Keratinocyte (primary cell): ENCODE measurements at regions of chr11 and their contacts with region 1.

Region 1: GRCh38 chr11:4072668-4073285 is 21.8 kb upstream of the RRM1 start:
- DNase-seq: no peak
- H3K4me3 ChIP-seq: no peak overlapping the region
- H3K27ac ChIP-seq: no peak overlapping the region
- H3K4me1 ChIP-seq: peaks cover 13% of the 10 kb centered on the region
- H3K27me3 ChIP-seq: no peaks in the 10 kb centered on the region
- CTCF ChIP-seq: peak; percentile 76 to 90 (median 82)

Region 2: DNA sequence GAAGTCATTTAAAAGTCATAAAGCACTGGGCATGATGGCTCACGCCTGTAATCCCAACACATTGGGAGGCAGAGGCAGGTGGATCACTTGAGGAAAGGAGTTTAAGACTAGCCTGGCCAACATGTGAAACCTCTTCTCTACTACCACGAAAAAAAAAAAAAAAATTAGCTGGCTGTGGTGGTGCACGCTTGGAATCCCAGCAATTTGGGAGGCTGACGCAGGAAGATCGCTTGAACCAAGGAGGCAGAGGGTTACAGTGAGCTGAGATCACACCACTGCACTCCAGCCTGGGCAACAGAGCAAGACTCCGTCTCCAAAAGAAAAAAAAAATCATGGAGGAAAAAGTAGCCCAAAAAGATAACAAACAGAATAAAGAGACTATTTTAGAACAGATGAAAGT is 317.6 kb before region 1 on chr11:
- dilution Hi-C with region 1: no loop called
- DNase-seq: no peak
- H3K4me3 ChIP-seq: no peak overlapping the region
- H3K27ac ChIP-seq: no peak overlapping the region
- H3K4me1 ChIP-seq: no peaks in the 10 kb centered on the region
- H3K27me3 ChIP-seq: no peaks in the 10 kb centered on the region
- CTCF ChIP-seq: no peak

Region 3: DNA sequence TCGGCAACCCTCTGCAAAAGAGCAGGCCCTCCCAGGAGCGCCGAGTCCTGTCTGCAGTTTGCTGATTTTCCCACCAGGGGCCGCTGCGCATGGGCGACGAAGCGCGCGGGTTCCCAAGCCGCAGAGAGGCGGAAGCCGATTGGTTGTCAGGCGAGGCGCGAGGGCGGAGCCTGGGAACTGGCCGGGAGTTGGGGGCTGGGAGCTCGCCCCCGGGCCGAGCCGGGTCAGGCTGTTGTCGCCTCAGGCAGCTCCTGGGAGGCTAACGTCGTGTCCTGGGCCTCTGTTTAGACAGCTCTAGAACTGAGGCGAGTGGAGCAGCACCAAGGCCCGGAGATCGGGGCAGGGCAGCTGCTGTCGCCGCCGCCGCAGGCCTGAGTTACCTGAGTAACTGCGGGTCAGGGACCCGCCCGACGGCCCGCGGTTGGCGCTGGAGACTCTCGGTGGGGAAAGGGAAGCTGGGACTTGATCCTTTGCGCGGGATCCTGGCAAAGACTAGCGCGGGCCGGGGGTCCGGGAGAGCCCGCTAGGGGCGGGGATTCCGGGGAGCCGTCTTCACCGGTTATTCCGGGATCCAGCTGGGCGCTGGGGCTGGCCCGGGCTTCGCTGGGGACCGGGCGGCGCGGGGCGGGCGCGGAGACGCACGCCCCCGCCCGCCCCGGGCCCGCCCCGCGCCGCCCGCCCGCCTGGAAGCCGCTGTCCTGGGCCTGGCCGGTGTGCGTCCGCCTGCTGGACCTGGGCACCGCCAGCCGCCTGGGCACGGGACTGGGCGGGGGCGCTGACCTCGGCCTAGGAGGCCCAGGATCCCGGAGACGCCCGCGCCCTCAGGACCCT is 217.6 kb before region 1 on chr11 and contains the start of gene STIM1:
- dilution Hi-C with region 1: loop called (anchors 25 kb)
- DNase-seq: peak; percentile 28
- H3K4me3 ChIP-seq: peak within 1 kb of the TSS; percentile 77 to 91 (median 83)
- H3K27ac ChIP-seq: peak within 1 kb of the TSS; percentile 85
- H3K4me1 ChIP-seq: peaks cover 37% of the 10 kb centered on the region
- H3K27me3 ChIP-seq: no peaks in the 10 kb centered on the region
- CTCF ChIP-seq: peak; percentile 84 to 95 (median 89)
- polyA plus RNA-seq, gene STIM1: 23.7 to 39.4 TPM (median 25.1 TPM) in 3 replicates

Region 4: DNA sequence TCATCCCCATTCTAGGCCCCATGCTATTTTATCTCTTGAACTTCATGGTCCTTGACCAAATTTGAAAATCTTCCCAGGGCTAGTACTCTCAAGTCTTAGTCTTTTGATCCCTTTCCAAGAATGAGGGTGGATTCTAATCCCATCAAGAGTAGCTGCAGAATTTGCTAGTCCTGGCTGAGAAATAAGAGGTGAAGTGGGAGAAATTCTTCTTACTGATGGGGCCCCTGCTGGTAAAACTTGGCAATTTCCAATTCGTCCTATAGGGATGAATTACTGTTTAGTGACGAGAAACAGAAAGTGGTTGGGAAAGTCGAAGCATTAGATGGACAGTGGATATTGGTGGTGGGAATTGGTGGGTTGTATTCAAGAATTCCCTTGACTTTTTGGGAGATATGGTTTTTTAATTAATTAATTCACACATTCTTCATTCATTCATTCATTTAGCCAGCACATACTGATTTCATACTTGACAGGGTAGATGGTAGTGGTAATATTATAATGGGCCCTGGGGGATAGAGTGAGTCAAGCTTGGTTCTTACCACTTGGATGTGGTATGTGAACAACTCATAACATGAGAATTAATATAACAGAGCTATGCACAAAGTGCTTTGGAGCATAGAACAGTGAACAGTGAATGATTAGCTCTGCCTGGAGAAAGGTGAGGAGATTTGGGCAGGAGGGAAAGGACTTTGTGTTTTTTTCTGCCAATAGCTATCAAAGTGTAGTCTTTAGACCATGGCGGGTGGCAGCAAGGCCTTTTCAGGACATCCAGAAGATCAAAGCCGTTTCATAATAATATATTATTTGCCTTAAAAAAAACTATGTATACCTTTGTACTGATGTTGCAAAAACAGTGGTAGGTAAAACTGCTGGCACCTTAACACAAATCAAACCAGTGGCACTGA is 113.5 kb before region 1 on chr11:
- dilution Hi-C with region 1: loop called (anchors 25 kb)
- DNase-seq: peak; percentile 52
- H3K4me3 ChIP-seq: peak overlapping the region in 1 of 3 experiments; percentile 32
- H3K27ac ChIP-seq: peak overlapping the region; percentile 30
- H3K4me1 ChIP-seq: peaks cover 44% of the 10 kb centered on the region
- H3K27me3 ChIP-seq: no peaks in the 10 kb centered on the region
- CTCF ChIP-seq: peak in 2 of 3 experiments; percentile 21 to 34

Region 5: GRCh38 chr11:4164884-4165590 is 92.3 kb after region 1 on chr11:
- dilution Hi-C with region 1: no loop called
- DNase-seq: no peak
- H3K4me3 ChIP-seq: no peak overlapping the region
- H3K27ac ChIP-seq: no peak overlapping the region
- H3K4me1 ChIP-seq: no peaks in the 10 kb centered on the region
- H3K27me3 ChIP-seq: no peaks in the 10 kb centered on the region
- CTCF ChIP-seq: no peak